ENCODE measurements at regions of chr4 and their contacts with region 1.

Region 1: GRCh38 chr4:15956179-15956850 is 6.7 kb downstream of the FGFBP2 start:
- DNase-seq: peak; percentile 77
- CTCF ChIP-seq: peak; percentile 81

Region 2: GRCh38 chr4:15479089-15479912 is 477.0 kb before region 1 on chr4:
- CTCF ChIA-PET with region 1: interaction called, 17 read pairs
- POLR2A ChIA-PET with region 1: no interaction called
- DNase-seq: peak; percentile 54
- CTCF ChIP-seq: peak; percentile 69

Region 3: DNA sequence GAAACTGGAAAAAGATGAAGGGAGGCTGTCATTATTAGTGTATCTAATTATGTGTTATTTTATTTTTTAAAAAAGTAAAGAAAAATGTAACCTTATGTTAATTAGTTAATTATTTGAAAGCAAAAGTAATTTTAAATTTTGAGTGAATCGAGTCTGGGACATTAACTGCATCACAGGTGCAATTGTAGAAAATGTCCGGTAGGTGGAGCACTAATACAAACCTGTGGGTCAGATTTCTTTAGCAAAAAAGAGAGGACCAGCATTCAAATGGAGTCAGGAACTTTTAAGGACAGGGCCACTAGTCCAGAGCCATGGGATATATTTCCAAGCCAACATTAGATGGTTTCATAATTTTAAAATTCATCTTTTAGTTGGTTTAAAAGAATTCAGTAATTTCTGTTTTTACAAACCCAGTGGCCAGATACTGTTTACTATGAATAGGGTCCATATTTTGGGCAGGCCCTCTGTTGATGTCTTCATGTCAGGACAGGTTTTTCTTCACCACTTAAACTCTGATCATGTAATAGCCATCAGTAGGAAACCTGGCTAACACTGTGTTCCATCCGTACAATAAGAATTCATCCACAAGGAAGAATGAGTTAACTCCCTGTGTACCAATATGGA is 226.3 kb before region 1 on chr4:
- CTCF ChIA-PET with region 1: interaction called, 11 read pairs
- POLR2A ChIA-PET with region 1: no interaction called
- DNase-seq: peak; percentile 64
- CTCF ChIP-seq: peak; percentile 71

Region 4: DNA sequence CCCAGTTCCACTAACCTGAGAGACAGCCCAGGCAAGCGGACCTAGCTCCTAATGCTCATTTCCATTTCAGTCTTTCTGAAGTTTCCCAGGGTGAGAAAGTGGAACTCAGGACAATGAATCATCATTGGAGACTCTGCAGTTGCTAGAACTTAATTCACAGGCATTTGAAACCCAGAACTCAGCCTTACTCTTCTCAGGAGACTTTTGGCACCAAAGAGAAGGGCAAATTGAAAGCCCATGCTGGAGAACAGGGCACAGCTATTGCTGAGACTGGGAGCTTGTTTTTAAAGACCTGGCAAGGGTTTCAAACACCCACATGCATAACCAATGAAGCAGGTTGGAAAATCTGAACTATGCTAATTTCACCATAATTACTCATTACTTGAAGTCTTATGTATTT is 217.4 kb before region 1 on chr4:
- CTCF ChIA-PET with region 1: interaction called, 12 read pairs
- POLR2A ChIA-PET with region 1: no interaction called
- DNase-seq: no peak
- CTCF ChIP-seq: no peak

Region 5: GRCh38 chr4:15930314-15930713 is 26.0 kb before region 1 on chr4:
- CTCF ChIA-PET with region 1: interaction called, 10 read pairs
- POLR2A ChIA-PET with region 1: no interaction called
- DNase-seq: no peak
- CTCF ChIP-seq: no peak